PC-3 (cell line): ENCODE measurements at regions of chr6 and their contacts with region 1.

Region 1: DNA sequence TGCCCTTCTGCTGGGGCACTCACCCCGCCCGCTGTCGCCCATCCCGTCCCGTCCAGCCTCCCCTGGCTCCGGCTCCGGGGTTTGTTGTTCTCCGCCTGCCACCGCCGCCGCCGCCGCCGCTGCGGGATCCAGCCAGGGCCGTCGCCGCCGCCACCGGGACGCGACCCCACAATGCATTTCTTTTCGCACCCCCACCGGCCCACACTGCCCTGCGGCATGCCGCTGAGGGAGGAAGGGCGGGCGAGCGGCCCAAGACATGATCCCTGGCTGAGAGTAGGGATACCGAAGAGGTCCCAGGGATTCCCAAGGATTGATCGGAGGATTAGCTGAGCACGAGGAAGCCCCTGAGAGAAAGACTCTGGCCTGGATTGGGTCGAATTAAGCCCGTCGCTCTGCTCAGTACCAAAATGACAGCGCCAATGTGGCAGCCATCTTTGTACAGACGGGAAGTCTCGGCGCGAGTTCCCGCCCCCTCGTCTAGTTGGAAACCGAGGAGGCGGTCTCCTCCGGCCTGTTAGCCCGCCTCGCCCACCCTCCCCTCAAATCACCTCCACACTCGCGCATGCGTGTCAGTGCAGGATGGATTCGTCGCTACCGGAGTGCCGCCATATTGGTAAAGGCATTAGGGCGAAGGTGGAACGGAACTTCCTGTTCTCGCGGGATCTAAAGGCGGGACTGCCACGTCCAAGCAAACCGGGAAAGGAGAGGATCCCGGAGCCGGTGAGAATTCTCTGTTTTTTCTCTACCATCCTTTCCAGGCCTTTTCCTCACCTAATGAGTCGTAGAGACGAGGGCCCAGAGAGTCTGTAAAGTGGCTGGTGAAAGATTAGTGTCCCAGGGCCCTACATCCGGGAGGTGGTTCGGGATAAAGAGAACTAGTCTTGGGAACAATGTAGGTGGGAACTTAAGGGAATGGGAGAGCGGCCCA is at the starts of genes RXRB and SLC39A7:
- DNase-seq: peak; percentile 99
- ATAC-seq: peak; percentile 56
- H3K4me3 ChIP-seq: peak within 1 kb of the TSS; percentile 97
- H3K27ac ChIP-seq: peak within 1 kb of the TSS; percentile 92
- H3K4me1 ChIP-seq: peaks cover 32% of the 10 kb centered on the region
- H3K27me3 ChIP-seq: no peaks in the 10 kb centered on the region
- CTCF ChIP-seq: no peak
- total RNA-seq, gene RXRB: 24.0 and 30.9 TPM in 2 replicates
- total RNA-seq, gene SLC39A7: 128 and 149 TPM in 2 replicates

Region 2: GRCh38 chr6:33161354-33162331 is 38.8 kb before region 1 on chr6:
- CTCF ChIA-PET with region 1: no interaction called
- POLR2A ChIA-PET with region 1: no interaction called
- intact Hi-C with region 1: loop called (anchors 5 kb)
- DNase-seq: peak; percentile 75
- ATAC-seq: peak; percentile 81
- H3K4me3 ChIP-seq: peak overlapping the region; percentile 69
- H3K27ac ChIP-seq: peak overlapping the region; percentile 38
- H3K4me1 ChIP-seq: peaks cover 18% of the 10 kb centered on the region
- H3K27me3 ChIP-seq: no peaks in the 10 kb centered on the region
- CTCF ChIP-seq: peak; percentile 91

Region 3: GRCh38 chr6:33271458-33272274 is 71.2 kb after region 1 on chr6 and contains the starts of genes RPS18 and VPS52:
- CTCF ChIA-PET with region 1: no interaction called
- POLR2A ChIA-PET with region 1: no interaction called
- intact Hi-C with region 1: loop called (anchors 10 kb)
- DNase-seq: peak; percentile 99
- ATAC-seq: peak; percentile 78
- H3K4me3 ChIP-seq: peak within 1 kb of the TSS; percentile 87
- H3K27ac ChIP-seq: peak within 1 kb of the TSS; percentile 75
- H3K4me1 ChIP-seq: peaks cover 39% of the 10 kb centered on the region
- H3K27me3 ChIP-seq: no peaks in the 10 kb centered on the region
- CTCF ChIP-seq: no peak
- total RNA-seq, gene RPS18: 2,873 and 3,161 TPM in 2 replicates
- total RNA-seq, gene VPS52: 33.7 and 39.9 TPM in 2 replicates

Region 4: DNA sequence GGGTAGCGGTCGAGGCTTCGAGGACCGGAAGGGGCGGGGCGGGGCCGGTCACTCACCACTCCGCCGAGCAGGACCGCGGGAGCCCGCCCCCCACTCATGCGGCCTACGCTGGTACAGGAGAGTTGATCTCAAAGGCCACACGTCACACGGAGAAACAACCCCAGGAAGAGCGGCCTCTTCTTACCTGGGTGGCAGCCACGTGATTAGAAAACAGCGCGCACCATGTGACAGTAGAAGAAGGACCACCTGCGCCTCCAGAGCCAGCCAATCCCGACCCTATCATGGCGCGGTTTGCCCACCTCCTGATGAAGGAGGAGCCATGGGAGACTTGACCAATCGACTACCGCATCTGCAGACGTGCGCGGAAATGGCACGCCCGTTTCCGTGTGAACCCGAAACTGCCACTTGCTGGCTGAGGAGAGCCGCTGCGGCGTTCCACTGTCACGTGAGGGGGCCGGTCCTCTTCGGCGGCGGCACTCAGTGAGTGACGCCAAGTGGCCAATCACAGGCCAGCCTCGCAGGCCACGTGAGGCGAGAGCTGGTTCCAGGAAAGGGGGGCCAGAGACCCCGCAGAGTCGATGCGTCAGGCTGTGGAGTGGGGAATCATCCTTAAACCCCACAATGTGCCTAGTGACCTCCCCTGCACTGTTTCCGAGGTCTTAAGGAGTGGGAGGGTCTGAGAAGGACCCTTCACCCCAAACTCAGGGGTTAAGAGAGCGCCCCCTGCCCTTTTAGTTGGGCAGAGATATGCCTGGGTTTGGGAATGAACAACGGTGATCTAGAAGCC is 217.6 kb after region 1 on chr6 and contains the start of gene CUTA:
- CTCF ChIA-PET with region 1: no interaction called
- POLR2A ChIA-PET with region 1: no interaction called
- intact Hi-C with region 1: loop called (anchors 10 kb)
- DNase-seq: peak; percentile 99
- ATAC-seq: peak; percentile 90
- H3K4me3 ChIP-seq: peak within 1 kb of the TSS; percentile 81
- H3K27ac ChIP-seq: peak within 1 kb of the TSS; percentile 82
- H3K4me1 ChIP-seq: peaks cover 28% of the 10 kb centered on the region
- H3K27me3 ChIP-seq: no peaks in the 10 kb centered on the region
- CTCF ChIP-seq: peak; percentile 65
- total RNA-seq, gene CUTA: 227 and 242 TPM in 2 replicates

Region 5: DNA sequence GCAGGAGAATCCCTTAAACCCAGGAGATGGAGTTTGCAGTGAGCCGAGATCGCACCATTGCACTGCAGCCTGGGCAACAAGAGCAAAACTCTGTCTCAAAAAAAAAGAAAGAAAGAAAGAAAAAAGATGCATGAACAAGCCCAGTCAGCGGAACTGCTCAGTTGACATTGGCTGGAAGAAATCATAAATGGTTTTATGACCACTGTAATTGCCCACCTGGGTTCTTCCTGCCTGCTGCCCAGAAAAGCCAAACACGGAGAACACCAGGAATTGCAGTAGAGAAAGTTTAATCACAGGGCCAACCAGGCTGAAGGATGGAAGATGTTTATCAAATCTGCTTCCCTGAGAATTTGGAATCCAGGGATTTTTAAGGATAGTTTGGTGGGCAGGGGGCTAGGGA is 356.9 kb after region 1 on chr6:
- CTCF ChIA-PET with region 1: no interaction called
- POLR2A ChIA-PET with region 1: no interaction called
- intact Hi-C with region 1: no loop called
- DNase-seq: no peak
- ATAC-seq: peak; percentile 24
- H3K4me3 ChIP-seq: no peak overlapping the region
- H3K27ac ChIP-seq: peak overlapping the region; percentile 94
- H3K4me1 ChIP-seq: peaks cover 18% of the 10 kb centered on the region
- H3K27me3 ChIP-seq: no peaks in the 10 kb centered on the region
- CTCF ChIP-seq: no peak